Activated T-helper 2 cell treated with anti-CD3 and anti-CD28 coated beads, Interferon-gamma antibody, Interleukin-2, Interleukin-4, amounts not matched to agents 10 μg/mL and 5 μg/mL and 100 μg/mL, durations not matched to agents 14 hours and 24 hours and 36 hours (primary cell): ENCODE measurements at regions of chr12 and their contacts with region 1.

Region 1: DNA sequence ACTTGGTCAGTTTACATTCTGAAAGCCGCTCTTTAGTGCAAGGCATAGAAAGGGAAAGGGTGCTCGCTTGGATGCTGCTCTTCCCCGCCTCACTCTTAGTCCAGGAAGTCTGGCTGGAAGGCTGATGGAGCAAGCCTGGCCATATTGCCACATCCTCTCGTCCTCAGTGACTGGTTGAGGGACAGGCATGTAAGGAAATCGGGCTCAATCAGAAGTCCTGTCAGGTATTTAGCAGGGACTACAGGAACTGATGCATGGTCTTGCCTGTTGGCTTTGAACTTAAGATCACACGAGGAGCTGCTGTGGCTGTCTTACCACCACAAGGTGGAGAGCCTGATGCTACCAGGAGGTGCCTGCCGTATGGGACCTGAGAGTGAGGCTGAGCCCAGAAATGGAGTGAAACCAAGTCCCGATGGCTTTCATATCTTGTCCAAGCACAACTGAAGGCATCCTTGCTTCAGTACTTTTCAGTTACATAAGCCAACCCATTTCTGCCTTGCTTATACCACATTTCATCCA is 10.7 kb upstream of the C12orf75 start:
- DNase-seq: no peak
- H3K4me3 Mint-ChIP-seq: no peak overlapping the region
- H3K27ac Mint-ChIP-seq: no peak overlapping the region
- H3K4me1 Mint-ChIP-seq: peaks cover 70% of the 10 kb centered on the region
- H3K27me3 Mint-ChIP-seq: no peaks in the 10 kb centered on the region

Region 2: DNA sequence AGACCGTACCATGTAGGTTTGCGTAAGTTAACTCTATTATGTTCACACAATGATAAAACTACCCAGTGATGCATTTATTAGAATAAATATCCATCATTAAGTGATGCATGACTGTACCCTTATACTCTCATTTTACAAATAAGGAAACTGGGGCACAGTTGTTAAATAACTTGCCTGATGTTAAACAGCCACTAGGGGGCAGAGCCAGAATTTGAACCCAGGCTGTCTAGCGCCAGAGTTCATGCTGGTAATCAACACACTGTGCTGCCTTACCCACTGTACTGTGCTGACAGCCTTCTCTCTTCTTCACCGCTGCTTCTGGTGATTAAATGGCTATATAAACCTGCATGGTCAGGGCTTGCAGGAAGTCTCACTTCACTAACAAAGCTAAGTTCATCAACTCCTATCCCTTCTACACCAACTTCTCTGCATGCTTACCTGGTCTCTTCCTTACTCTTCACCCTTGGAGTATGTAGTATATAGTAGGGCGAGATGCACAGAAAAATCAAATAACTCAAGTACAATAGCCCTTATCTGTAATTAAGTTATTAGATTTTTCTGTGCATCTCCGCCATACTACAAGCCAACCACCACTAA is 40.2 kb before region 1 on chr12:
- intact Hi-C with region 1: loop called (anchors 2 kb)
- DNase-seq: peak; percentile 30
- H3K4me3 Mint-ChIP-seq: no peak overlapping the region
- H3K27ac Mint-ChIP-seq: no peak overlapping the region
- H3K4me1 Mint-ChIP-seq: peaks cover 13% of the 10 kb centered on the region
- H3K27me3 Mint-ChIP-seq: no peaks in the 10 kb centered on the region